CD4-positive, alpha-beta T cell (primary cell): ENCODE measurements at regions of chr17 and their contacts with region 1.

Region 1: GRCh38 chr17:4815043-4815675 is 8.2 kb downstream of the PLD2 start:
- DNase-seq: no peak
- ATAC-seq: no peak
- H3K4me3 ChIP-seq: no peak overlapping the region
- H3K4me3 Mint-ChIP-seq: no peak overlapping the region
- H3K27ac ChIP-seq: no peak overlapping the region
- H3K27ac Mint-ChIP-seq: no peak overlapping the region
- H3K4me1 ChIP-seq: no peaks in the 10 kb centered on the region
- H3K4me1 Mint-ChIP-seq: no peaks in the 10 kb centered on the region
- H3K27me3 ChIP-seq: no peaks in the 10 kb centered on the region
- H3K27me3 Mint-ChIP-seq: no peaks in the 10 kb centered on the region
- CTCF ChIP-seq: no peak

Region 2: DNA sequence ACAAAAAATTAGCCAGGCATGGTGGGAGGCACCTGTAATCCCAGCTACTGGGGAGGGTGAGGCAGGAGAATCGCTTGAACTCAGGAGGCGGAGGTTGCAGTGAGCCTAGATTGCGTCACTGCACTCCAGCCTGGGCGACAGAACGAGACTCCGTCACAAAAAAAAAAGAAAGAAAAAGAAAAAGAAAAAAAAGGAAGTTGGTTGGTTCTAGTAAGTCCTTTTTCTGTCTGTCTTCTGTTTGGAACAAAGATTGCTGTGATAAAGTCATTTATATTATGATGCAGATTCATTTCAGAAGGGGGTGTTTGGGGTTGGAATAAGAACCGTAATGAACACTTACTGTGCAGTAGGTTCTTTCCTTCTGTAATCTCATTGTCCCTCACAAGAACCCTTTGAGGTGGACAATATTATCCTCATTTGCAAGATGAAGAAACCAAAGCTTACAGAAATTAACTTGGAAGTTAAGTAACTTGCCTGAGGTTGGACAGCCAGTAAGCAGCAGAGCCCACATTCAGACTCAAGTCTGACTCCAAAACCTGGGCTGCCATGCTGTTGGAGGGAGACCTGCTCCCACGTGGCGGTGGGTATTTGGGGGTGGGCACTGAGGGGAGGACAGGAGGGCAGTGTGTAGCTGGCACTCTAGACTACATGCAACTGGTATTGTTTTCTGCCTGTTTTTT is 28.3 kb after region 1 on chr17:
- CTCF ChIA-PET with region 1: no interaction called
- POLR2A ChIA-PET with region 1: no interaction called
- intact Hi-C with region 1: loop called in 1 of 2 experiments (anchors 1 kb)
- DNase-seq: no peak
- ATAC-seq: no peak
- H3K4me3 ChIP-seq: no peak overlapping the region
- H3K4me3 Mint-ChIP-seq: no peak overlapping the region
- H3K27ac ChIP-seq: no peak overlapping the region
- H3K27ac Mint-ChIP-seq: no peak overlapping the region
- H3K4me1 ChIP-seq: peaks cover 26% of the 10 kb centered on the region
- H3K4me1 Mint-ChIP-seq: peaks cover 70% of the 10 kb centered on the region
- H3K27me3 ChIP-seq: no peaks in the 10 kb centered on the region
- H3K27me3 Mint-ChIP-seq: no peaks in the 10 kb centered on the region
- CTCF ChIP-seq: no peak